Naive thymus-derived CD4-positive, alpha-beta T cell (primary cell): ENCODE measurements at regions of chr3 and their contacts with region 1.

Region 1: DNA sequence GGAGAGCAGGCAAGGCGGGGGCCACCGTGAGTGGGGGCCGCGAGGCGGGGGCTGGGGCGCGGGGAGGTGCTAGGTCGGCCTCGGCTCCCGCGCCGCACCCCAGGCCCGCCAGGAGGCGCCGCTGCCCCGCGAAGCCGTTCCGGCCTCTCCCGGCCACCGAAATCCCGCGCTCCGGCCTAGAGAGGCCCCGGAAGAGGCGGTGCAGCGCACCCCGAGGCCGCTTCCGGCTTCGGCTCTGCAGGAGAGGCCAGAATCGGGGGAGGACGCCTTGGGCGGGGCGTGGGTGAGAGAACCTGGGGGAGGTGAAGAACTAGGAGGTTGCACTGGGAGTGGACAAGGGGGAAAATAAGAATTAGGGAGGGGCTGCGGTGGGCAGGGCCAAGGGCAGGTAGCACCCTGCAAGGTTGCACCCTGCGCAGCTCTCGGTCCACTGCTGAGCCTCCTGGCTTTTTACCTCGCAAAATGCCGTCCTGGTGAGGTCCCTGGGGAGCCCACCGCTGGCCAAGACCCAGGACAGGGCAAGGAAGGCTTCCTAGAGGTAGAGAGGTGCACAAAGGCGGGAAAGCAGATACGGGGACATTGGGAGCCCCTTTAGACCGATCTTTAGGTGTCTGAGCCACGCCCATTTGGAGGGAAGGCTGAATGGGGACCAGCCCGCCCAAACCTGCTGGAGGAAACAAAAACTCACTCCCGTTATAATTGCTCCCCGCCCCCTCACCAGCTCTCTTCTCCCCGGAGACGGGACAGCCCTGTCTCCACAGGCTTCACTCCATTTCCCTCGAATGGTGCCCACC is 8.4 kb upstream of the GNAI2 start:
- DNase-seq: peak; percentile 86 to 96 (median 91)
- ATAC-seq: peak; percentile 91
- H3K4me3 ChIP-seq: peak overlapping the region; percentile 88
- H3K4me3 Mint-ChIP-seq: peak overlapping the region; percentile 89 to 98 (median 96)
- H3K27ac ChIP-seq: peak overlapping the region; percentile 77
- H3K27ac Mint-ChIP-seq: peak overlapping the region; percentile 86 to 97 (median 93)
- H3K4me1 ChIP-seq: peaks cover 9 to 12% of the 10 kb centered on the region in 2 donors
- H3K4me1 Mint-ChIP-seq: peaks cover 16 to 36% (median 34%) of the 10 kb centered on the region in 7 donors
- H3K27me3 ChIP-seq: no peaks in the 10 kb centered on the region
- H3K27me3 Mint-ChIP-seq: peaks cover 0 to 17% (median 0%) of the 10 kb centered on the region in 5 donors

Region 2: DNA sequence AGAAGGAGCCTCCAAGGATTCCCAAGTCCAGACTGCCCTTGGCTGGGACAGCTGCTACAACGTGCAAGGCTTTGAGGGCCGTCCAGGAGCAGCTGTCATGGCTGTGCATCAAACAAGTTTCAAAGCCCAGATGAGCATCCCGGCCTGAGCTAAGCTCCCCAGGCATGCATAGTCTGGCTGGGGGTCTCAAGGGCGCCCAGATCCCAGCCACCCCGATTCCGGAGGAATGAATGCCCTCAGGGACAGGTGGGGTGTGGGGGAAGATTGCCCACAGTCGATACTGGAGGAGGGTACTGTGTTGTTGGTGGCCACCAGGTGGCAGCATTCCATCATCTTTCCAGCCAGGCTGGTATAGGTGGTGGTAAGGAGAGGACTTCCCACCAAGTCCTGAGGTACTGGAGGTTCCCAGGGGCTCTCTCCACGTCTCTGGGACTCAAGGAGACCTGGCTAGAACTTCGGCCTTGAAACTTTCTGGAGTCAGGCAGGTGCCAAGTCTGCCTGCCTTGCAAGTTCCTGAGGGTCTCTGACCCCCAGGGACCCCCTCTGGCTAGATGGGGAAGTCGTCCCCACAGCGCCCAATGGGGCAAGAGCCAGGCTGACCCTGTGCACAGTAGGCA is 106.1 kb before region 1 on chr3:
- CTCF ChIA-PET with region 1: interaction called, 10 read pairs
- POLR2A ChIA-PET with region 1: interaction called, 4 read pairs
- intact Hi-C with region 1: loop called (anchors 1 kb)
- DNase-seq: peak; percentile 43 to 72 (median 57)
- ATAC-seq: peak; percentile 88
- H3K4me3 ChIP-seq: no peak overlapping the region
- H3K4me3 Mint-ChIP-seq: peak overlapping the region in 1 of 10 donors; percentile 43
- H3K27ac ChIP-seq: peak overlapping the region; percentile 43
- H3K27ac Mint-ChIP-seq: peak overlapping the region in 4 of 9 donors; percentile 50 to 55 (median 53)
- H3K4me1 ChIP-seq: no peaks in the 10 kb centered on the region
- H3K4me1 Mint-ChIP-seq: peaks cover 0 to 9% (median 0%) of the 10 kb centered on the region in 7 donors
- H3K27me3 ChIP-seq: no peaks in the 10 kb centered on the region
- H3K27me3 Mint-ChIP-seq: no peaks in the 10 kb centered on the region

Region 3: GRCh38 chr3:50192689-50193141 is 34.9 kb before region 1 on chr3:
- CTCF ChIA-PET with region 1: interaction called, 108 read pairs
- POLR2A ChIA-PET with region 1: interaction called, 4 read pairs
- intact Hi-C with region 1: loop called (anchors 1 kb)
- DNase-seq: peak; percentile 73 to 90 (median 83)
- ATAC-seq: peak; percentile 53
- H3K4me3 ChIP-seq: no peak overlapping the region
- H3K4me3 Mint-ChIP-seq: peak overlapping the region in 7 of 10 donors; percentile 45 to 67 (median 62)
- H3K27ac ChIP-seq: no peak overlapping the region
- H3K27ac Mint-ChIP-seq: peak overlapping the region in 3 of 9 donors; percentile 51 to 70 (median 65)
- H3K4me1 ChIP-seq: peaks cover 5 to 13% of the 10 kb centered on the region in 2 donors
- H3K4me1 Mint-ChIP-seq: peaks cover 4 to 16% (median 9%) of the 10 kb centered on the region in 7 donors
- H3K27me3 ChIP-seq: no peaks in the 10 kb centered on the region
- H3K27me3 Mint-ChIP-seq: peaks cover 0 to 21% (median 5%) of the 10 kb centered on the region in 5 donors

Region 4: DNA sequence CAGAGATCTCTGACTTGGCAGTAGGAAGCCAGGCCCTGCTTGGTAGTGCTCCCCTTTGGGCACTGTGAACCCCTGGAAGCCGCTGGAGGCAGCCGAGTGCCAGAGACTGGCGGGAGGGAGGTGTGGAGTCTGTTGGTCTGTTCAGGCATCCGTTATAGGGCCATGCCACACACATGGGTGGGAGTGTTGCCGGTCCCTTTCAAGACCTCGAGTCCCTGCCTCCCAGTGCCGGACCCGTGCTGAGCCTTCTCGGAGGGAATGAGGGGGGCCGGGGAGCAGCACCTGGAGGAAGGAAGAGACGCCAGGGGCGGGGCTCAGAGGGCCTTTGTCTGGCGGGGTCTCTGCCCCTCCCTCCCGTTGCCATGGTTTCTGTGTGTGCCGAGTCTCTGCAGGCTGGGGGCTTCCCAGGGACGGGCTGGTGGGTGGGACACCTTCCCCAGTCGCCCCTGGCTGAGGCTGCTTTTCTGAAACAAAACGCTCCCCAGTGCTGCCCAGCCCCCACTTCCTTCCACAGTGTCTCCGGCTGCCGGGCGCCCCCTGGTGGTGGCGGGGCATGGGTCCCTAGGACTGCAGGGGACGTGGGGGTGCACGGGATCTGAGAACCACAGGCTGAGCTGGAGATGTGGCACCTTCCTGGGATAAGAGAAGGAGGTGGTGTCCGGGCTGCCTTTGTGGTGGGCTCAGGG is 18.4 kb after region 1 on chr3:
- CTCF ChIA-PET with region 1: interaction called, 211 read pairs
- POLR2A ChIA-PET with region 1: interaction called, 253 read pairs
- intact Hi-C with region 1: loop called (anchors 1 kb)
- DNase-seq: peak; percentile 88 to 99 (median 94)
- ATAC-seq: peak; percentile 90
- H3K4me3 ChIP-seq: peak overlapping the region; percentile 52
- H3K4me3 Mint-ChIP-seq: peak overlapping the region; percentile 77 to 89 (median 82)
- H3K27ac ChIP-seq: peak overlapping the region; percentile 88
- H3K27ac Mint-ChIP-seq: peak overlapping the region; percentile 80 to 96 (median 95)
- H3K4me1 ChIP-seq: peaks cover 61 to 87% of the 10 kb centered on the region in 2 donors
- H3K4me1 Mint-ChIP-seq: peaks cover 57 to 90% (median 74%) of the 10 kb centered on the region in 7 donors
- H3K27me3 ChIP-seq: no peaks in the 10 kb centered on the region
- H3K27me3 Mint-ChIP-seq: no peaks in the 10 kb centered on the region

Region 5: DNA sequence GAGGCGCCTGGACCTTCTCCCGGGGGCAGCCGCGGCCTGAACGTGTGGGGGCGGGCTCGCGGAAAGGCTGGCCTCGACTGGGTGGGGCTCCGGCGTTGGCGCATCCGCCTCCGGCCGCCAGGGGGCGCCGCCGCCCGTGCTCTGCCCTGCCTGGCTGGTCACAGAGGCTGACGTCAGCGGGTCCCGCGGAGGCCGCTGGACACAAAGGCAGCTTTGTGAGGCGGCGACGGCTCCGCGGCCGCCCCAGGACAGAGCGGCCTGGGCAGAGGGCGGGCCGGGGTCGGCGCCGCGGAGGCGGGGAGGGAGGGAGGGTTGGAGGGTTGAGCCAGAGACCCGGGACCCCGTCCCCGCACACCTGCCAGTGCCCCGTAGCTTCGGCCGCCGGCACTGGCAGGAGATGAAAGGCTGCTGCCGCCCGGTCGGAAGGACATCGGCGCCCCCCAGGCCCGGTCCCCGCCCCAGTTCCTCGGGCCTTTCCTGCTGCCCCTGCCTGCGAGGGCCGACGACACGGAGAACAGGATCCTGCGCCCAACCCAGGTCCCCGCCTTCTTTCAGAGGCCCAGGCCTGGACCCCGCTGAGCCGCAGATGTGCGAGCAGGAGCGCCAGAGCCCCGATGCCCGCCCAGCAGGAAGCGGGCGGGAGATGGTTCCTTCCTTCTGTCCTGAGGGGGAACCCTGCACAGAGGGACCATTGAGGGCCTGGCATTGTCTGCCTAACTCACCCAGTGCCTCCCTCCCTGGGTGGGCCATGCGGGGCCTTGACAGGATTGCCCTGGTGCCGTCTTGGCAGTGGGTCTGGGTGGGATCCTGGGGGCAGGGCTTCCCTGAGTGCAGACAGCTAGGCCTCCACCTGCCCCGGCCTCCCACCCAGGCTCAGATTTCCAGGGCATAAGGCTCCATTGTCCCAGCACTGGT is 32.7 kb after region 1 on chr3:
- CTCF ChIA-PET with region 1: interaction called, 5 read pairs
- POLR2A ChIA-PET with region 1: interaction called, 5 read pairs
- intact Hi-C with region 1: loop called (anchors 1 kb)
- DNase-seq: peak; percentile 58 to 95 (median 78)
- ATAC-seq: peak; percentile 95
- H3K4me3 ChIP-seq: peak overlapping the region; percentile 43
- H3K4me3 Mint-ChIP-seq: peak overlapping the region; percentile 57 to 86 (median 68)
- H3K27ac ChIP-seq: peak overlapping the region; percentile 76
- H3K27ac Mint-ChIP-seq: peak overlapping the region in 8 of 9 donors; percentile 38 to 85 (median 77)
- H3K4me1 ChIP-seq: peaks cover 6% of the 10 kb centered on the region in 2 donors
- H3K4me1 Mint-ChIP-seq: peaks cover 0 to 12% (median 4%) of the 10 kb centered on the region in 7 donors
- H3K27me3 ChIP-seq: no peaks in the 10 kb centered on the region
- H3K27me3 Mint-ChIP-seq: no peaks in the 10 kb centered on the region

Region 6: DNA sequence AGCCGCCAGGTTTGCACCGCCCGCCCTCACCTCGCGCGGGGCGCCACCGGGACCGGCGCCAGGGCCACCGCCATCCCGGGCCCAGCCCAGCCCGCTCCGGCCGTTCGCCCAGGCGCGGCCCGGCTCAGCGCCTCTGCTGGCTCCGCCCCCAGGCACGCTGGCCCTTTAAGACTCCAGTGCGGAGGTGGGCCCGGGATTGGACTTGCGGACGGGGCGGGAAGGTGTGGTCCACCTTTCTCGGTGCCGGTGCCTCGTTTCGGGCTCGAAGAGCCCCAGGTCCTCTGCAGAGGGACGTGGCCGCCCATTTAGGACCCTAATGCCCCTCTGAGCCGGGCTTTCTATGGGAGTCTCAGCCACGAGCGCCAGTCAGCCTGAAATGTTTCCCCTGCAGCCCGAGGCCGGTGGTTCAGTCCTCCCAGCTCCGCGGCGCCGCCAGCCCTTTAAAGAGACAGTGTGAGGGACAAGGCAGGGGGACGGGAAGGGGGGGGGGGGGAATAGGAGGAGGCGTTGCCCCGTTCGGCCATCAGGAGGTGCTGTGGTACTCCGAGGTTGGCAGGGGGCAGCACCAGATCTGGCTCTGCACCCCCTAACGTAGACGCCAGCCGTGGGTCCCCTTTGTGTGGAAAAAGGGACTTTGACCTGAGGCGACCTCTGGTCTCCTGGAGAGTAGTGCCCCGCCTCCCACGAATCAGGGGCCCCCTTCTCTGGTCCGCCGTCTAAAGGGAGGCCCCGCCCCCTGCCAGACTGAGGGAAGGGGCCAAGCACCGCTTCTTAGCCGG is 93.9 kb after region 1 on chr3:
- CTCF ChIA-PET with region 1: interaction called, 3 read pairs
- POLR2A ChIA-PET with region 1: no interaction called
- intact Hi-C with region 1: loop called (anchors 2 kb)
- DNase-seq: peak; percentile 67 to 90 (median 83)
- ATAC-seq: peak; percentile 83
- H3K4me3 ChIP-seq: peak overlapping the region; percentile 97
- H3K4me3 Mint-ChIP-seq: peak overlapping the region; percentile 74 to 90 (median 82)
- H3K27ac ChIP-seq: peak overlapping the region; percentile 95
- H3K27ac Mint-ChIP-seq: peak overlapping the region; percentile 40 to 96 (median 93)
- H3K4me1 ChIP-seq: peaks cover 12 to 21% of the 10 kb centered on the region in 2 donors
- H3K4me1 Mint-ChIP-seq: peaks cover 21 to 45% (median 36%) of the 10 kb centered on the region in 7 donors
- H3K27me3 ChIP-seq: no peaks in the 10 kb centered on the region
- H3K27me3 Mint-ChIP-seq: no peaks in the 10 kb centered on the region

Region 7: GRCh38 chr3:50675179-50676030 is 447.8 kb after region 1 on chr3:
- CTCF ChIA-PET with region 1: no interaction called
- POLR2A ChIA-PET with region 1: no interaction called
- intact Hi-C with region 1: no loop called
- DNase-seq: peak; percentile 15 to 79 (median 38)
- ATAC-seq: peak; percentile 75
- H3K4me3 ChIP-seq: peak overlapping the region; percentile 26
- H3K4me3 Mint-ChIP-seq: peak overlapping the region; percentile 71 to 87 (median 78)
- H3K27ac ChIP-seq: no peak overlapping the region
- H3K27ac Mint-ChIP-seq: peak overlapping the region in 1 of 9 donors; percentile 56
- H3K4me1 ChIP-seq: no peaks in the 10 kb centered on the region
- H3K4me1 Mint-ChIP-seq: peaks cover 4 to 10% (median 6%) of the 10 kb centered on the region in 7 donors
- H3K27me3 ChIP-seq: peaks cover 0 to 3% of the 10 kb centered on the region in 2 donors
- H3K27me3 Mint-ChIP-seq: peaks cover 17 to 66% (median 32%) of the 10 kb centered on the region in 5 donors